Heart left ventricle (tissue), 16 donors: ENCODE measurements at regions of chrX and their contacts with region 1.

Region 1: DNA sequence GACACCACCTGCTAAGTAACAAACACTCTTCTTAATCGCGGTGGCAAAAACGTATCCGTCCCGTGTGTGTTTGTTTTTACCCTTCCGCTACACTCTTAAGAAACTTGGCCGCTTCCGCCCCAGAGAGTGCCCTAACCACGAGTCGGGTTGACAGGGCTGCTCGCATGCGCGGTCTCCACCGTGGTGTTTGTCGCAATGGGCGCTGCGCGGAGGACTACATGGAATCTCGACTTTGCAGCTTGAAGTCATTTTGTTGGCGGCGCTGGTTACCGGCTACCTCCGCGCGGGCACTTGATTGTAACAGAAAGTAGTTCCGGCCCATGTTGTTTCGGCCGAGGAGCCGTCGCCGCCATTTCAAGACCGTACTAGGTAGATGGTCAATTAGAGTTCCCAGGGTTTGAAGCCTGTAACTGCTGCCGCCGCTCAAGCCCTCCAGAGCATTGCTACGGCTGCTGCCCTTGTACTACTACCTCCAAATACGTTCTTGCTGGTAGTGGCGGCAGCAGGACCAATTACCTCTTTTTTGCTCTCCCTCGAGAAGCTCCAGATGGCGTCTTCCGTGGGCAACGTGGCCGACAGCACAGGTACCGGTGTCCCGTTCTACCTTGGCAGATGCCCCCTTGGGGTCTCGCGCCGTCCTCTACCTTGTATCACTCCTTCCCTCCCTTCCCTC is at the start of gene OGT:
- DNase-seq: peak; percentile 94 to 97 (median 96)
- ATAC-seq: peak; percentile 91 to 97 (median 96)
- H3K4me3 ChIP-seq: peak within 1 kb of the TSS; percentile 53 to 99 (median 81)
- H3K27ac ChIP-seq: peak within 1 kb of the TSS; percentile 80 to 98 (median 92)
- H3K4me1 ChIP-seq: peaks cover 0 to 31% (median 10%) of the 10 kb centered on the region in 12 donors
- H3K27me3 ChIP-seq: no peaks in the 10 kb centered on the region
- CTCF ChIP-seq: no peak
- POLR2A ChIP-seq: peak; percentile 26 to 48
- total RNA-seq, gene OGT: 64.8 to 84.1 (median 77.4) TPM

Region 2: DNA sequence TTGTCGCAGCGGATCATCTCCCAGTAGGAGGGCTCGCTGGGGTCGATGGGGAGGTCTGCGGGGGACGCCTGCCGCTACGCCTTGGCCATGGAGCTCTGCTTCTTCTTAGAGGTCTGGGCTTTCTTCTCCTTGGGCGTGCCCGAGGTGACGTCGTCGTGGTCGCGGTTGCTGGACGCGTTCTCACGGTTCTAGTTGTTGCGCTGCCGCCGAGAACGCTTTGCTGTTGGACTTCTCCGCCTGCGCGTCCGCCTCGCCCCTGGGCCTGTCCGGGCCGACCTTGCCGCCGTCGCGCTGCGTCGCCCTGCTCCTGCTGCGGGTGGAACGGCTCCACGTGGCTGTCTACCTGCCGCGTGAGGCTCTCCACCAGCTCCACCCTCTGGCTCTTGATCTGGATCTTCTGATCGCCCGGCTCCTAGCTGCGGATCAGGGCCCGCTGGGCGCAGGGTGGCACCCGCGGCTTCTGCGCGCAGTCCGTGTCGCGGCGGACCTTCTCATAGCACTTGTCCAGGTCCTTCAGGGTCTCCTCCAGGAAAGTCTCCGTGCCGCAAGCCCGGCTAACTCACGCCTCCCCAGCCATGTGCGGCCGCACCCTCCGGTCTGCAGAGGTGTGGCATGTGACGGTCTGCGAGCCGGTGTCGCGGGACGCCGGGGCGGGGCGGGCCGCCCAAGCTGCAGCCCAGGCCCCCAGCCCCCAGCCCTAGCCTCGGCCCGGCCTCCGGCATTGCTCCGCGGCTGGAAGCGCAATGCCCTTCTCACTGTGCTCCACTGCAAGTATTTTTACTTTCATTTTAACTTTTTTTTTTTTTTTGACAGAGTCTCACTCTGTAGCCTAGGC is 40.4 kb before region 1 on chrX:
- intact Hi-C with region 1: loop called in 1 of 10 experiments (anchors 5 kb)
- DNase-seq: peak in 4 of 5 donors; percentile 34 to 77 (median 52)
- ATAC-seq: peak; percentile 55 to 85 (median 70)
- H3K4me3 ChIP-seq: peak overlapping the region in 11 of 12 donors; percentile 36 to 74 (median 57)
- H3K27ac ChIP-seq: peak overlapping the region in 3 of 12 donors; percentile 30 to 60 (median 42)
- H3K4me1 ChIP-seq: peaks cover 0 to 9% (median 0%) of the 10 kb centered on the region in 12 donors
- H3K27me3 ChIP-seq: peaks cover 0 to 2% (median 0%) of the 10 kb centered on the region in 9 donors
- CTCF ChIP-seq: no peak
- POLR2A ChIP-seq: no peak

Region 3: GRCh38 chrX:71573591-71573990 is 40.7 kb after region 1 on chrX:
- intact Hi-C with region 1: loop called in 1 of 10 experiments (anchors 5 kb)
- DNase-seq: no peak
- ATAC-seq: no peak
- H3K4me3 ChIP-seq: no peak overlapping the region
- H3K27ac ChIP-seq: no peak overlapping the region
- H3K4me1 ChIP-seq: peaks cover 0 to 7% (median 0%) of the 10 kb centered on the region in 12 donors
- H3K27me3 ChIP-seq: peaks cover 0 to 4% (median 0%) of the 10 kb centered on the region in 9 donors
- CTCF ChIP-seq: no peak
- POLR2A ChIP-seq: no peak